Common myeloid progenitor, CD34-positive (primary cell): ENCODE measurements at regions of chr14 and their contacts with region 1.

Region 1: DNA sequence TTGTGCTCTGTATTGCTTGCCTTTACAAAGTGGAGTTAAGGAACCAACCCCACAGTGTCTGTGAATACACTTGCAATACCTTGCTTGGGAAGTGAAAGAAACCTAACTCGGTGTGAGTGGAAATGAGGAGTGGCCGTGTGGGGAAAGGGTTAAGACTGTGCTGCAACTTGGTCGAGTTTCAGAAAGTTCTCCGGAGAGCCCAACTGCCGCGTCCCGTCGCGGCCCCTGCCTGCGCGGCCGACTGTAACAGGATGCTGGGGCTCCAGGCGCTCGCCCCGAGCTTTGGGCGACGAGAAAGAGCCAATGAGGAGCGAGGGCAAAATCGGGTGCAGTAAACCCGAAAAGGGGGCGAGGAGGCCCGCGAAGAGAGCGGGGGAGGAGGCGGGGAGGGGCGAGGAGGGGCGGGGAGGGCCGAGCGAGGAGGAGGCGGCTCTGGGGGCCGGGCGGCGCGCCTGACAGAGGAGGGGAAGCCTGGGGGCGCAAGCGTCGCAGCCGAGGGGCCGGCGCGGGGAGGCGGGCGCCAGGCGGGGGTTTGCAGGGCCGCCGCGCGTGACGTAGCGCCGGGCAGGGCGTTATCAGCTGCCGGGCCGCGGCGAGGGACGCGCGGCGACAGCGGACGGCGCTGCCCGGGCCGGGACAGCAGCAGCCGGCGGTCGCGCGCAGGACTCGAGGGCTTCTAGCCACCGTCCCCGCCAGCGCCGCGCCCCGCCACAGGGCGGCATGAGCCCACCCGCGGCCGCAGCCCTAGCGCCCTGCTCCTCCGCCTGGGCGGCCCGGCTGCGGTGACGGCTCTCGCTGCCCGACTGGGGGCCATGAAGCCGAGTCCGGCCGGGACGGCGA is at the start of gene DACT1:
- DNase-seq: peak; percentile 69 to 88 (median 83)
- H3K4me3 ChIP-seq: peak within 1 kb of the TSS; percentile 67 to 92 (median 78)
- H3K27ac ChIP-seq: peak within 1 kb of the TSS in 1 of 2 experiments; percentile 43
- H3K4me1 ChIP-seq: peaks cover 17 to 42% (median 29%) of the 10 kb centered on the region in 4 experiments
- H3K27me3 ChIP-seq: peaks cover 0 to 11% (median 0%) of the 10 kb centered on the region in 5 experiments

Region 2: DNA sequence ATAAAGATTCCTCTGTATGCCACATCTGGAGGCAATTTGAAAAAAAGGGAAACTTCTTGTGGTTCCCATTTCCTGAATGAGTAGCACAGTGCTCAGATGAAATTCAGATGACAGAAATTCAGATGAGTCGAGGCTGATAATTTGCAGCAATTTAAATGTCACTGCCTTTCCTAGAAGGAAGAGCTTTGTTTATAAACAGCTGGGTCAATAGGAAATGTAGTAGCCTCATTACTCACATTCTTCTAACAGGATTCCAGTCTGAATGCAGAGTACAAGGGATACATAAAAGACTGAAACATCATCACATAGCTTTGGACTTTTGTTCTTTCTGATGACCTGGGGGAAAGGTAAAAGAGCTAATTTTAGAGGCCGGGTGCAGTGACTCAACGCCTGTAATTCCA is 11.2 kb before region 1 on chr14:
- CTCF ChIA-PET with region 1: interaction called, 11 read pairs
- POLR2A ChIA-PET with region 1: no interaction called
- DNase-seq: peak in 2 of 3 donors; percentile 36 to 44
- H3K4me3 ChIP-seq: peak overlapping the region in 1 of 7 experiments; percentile 13
- H3K27ac ChIP-seq: no peak overlapping the region
- H3K4me1 ChIP-seq: peaks cover 8 to 19% (median 14%) of the 10 kb centered on the region in 4 experiments
- H3K27me3 ChIP-seq: no peaks in the 10 kb centered on the region

Region 3: DNA sequence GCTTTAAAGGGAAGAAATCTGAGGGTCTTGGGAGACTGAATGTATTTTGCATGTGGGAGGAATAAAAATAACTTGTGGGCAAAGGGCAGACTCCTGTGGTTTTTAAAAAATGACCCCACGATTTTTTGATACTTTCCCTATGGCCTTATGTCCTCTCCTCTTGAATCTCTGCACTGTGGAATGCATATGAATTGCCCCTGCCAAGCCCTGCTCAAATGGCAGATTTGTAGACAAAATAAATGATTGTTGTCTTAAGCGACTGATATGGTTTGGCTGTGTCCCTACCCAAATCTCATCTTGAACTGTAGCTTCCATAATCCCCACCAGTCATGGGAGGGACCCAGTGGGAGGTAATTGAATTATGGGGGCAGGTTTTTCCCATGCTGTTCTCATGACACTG is 224.0 kb after region 1 on chr14:
- CTCF ChIA-PET with region 1: no interaction called
- POLR2A ChIA-PET with region 1: no interaction called
- DNase-seq: no peak
- H3K4me3 ChIP-seq: no peak overlapping the region
- H3K27ac ChIP-seq: no peak overlapping the region
- H3K4me1 ChIP-seq: no peaks in the 10 kb centered on the region
- H3K27me3 ChIP-seq: no peaks in the 10 kb centered on the region

Region 4: DNA sequence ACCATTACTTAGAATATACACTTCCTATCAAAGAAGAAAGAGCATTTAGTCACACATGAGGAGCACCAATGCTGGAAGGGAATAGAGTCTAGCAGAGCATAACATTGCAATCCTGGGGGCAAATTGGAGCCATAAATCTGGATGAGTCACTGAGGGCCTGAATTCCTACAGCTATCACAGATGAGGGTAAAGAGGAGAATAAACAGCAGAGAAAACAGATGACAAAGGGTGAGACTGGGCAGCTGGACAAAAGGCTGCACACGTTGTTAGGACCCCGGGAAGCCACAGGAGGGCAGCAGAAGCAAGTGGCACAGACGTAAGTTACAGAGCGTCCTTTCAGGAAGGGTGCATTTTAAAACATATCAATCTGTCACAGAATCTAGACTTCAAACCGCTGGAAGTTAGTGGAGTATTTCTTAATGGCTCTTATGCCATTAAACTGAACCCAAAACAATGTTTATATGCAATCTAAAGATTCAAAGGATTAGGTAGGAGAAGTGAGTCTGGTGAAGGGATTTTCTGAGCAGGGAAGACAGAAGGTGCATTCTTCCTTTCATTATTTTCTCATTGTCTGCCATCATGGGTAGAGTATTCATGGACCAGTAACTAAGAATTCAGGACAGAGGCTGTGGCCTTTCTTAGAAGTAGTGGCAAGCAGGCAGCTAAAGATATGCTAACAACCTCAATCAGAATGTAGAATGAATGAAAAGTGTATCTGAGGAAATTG is 391.0 kb after region 1 on chr14:
- CTCF ChIA-PET with region 1: interaction called, 18 read pairs
- POLR2A ChIA-PET with region 1: no interaction called
- DNase-seq: peak; percentile 38 to 70 (median 67)
- H3K4me3 ChIP-seq: peak overlapping the region in 3 of 7 experiments; percentile 4 to 58 (median 9)
- H3K27ac ChIP-seq: no peak overlapping the region
- H3K4me1 ChIP-seq: peaks cover 0 to 11% (median 2%) of the 10 kb centered on the region in 4 experiments
- H3K27me3 ChIP-seq: no peaks in the 10 kb centered on the region